ENCODE measurements at regions of chr11 and their contacts with region 1.

Region 1: DNA sequence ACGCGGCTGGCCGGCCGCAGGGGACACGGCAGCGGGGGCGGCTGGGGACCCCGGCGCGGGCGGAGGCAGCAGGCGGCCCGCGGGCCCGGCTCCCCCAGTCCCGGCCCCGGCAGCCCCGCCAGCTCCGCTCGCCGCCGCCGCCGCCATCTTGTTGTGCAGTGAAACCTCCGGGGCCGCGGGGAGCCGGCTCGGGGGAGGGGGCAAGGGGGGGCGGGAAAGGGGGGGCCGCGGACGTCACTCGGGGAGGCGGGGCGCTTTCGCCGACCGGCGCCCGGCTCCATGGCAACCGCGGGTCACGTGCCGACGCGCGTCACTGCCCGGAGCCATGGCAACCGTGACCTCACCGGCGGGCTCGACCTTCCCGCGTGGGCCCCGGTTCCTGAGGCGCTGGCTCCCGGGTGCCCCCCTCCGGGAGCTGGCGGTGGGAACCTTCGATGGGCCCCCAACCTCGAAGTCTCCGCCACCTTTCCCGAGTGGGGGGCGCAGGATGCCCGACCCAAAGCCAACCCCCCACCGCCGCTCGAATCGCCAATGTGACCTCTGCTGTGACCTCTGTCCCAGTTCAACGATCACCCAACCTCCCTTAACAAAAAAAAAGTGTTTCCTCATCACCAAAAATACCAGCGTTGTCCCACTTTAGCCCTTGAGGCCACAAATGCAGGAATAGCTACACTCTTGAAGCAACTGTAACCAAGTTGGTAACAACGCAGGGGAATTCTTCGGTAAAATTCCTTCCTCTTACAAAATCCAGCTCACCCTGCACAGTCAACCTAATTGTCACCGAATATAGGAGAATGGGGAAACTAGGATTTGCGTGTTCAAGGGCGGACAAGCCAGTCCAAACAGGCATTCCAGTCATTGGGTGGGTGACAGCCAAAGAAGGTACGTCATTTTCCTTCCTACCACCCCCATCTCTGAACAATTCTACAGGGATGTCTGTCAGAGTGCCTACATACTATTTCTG is at the start of gene SIK3:
- DNase-seq: peak; percentile 83 to 90
- ATAC-seq: peak; percentile 73 to 75
- H3K4me3 ChIP-seq: peak within 1 kb of the TSS; percentile 75 to 99 (median 88)
- H3K27ac ChIP-seq: peak within 1 kb of the TSS; percentile 90 to 97 (median 92)
- H3K4me1 ChIP-seq: peaks cover 41 to 45% of the 10 kb centered on the region in 2 donors
- H3K27me3 ChIP-seq: no peaks in the 10 kb centered on the region
- CTCF ChIP-seq: peak in 3 of 5 experiments; percentile 50 to 68 (median 59)
- POLR2A ChIP-seq: peak; percentile 55 to 69
- total RNA-seq, gene SIK3: 34.4 to 42.4 (median 37.2) TPM

Region 2: DNA sequence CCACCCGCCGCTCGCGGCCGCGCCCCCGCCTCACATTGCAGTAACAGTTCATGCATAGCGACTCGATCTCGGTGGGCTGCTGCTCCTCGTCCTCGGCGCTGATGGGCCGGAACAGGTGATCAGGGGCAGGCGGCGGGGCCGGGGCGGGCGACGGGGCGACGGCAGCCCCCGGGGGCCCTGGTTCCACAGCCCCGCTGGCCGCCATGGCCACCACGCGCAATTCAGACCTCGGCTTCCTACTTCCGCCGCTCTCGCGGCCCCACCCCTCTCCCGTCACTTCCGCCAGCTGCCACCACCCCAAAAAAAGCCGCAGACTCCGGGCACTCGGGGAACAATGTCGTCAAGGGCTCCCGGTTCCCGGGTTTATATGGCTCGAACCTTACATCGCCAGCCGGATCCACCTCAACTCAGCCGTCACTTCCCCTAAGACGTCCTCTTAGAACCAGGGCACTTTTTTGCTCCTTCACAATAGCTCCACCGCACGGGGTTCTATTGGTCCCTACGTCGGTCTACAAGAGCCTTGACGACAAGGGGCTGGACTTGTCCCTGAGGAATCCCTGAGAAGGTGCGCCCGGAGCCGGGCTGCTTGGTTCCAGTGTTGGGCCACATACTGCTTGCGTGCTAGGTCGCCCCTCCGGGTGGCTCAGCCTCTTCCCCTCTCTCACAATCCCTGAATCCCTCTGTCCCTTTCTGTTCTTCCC is 310.6 kb before region 1 on chr11 and contains the start of gene ZPR1:
- in situ Hi-C with region 1: loop called in 3 of 4 experiments (anchors 10 kb)
- intact Hi-C with region 1: loop called (anchors 2 kb)
- DNase-seq: peak; percentile 68 to 69
- ATAC-seq: peak; percentile 85 to 88
- H3K4me3 ChIP-seq: peak within 1 kb of the TSS; percentile 78 to 98 (median 96)
- H3K27ac ChIP-seq: peak within 1 kb of the TSS; percentile 83 to 89 (median 88)
- H3K4me1 ChIP-seq: peaks cover 17 to 18% of the 10 kb centered on the region in 2 donors
- H3K27me3 ChIP-seq: no peaks in the 10 kb centered on the region
- CTCF ChIP-seq: peak in 1 of 5 experiments; percentile 9
- POLR2A ChIP-seq: peak; percentile 61 to 77
- total RNA-seq, gene ZPR1: 43.3 to 82.5 (median 56.9) TPM

Region 3: DNA sequence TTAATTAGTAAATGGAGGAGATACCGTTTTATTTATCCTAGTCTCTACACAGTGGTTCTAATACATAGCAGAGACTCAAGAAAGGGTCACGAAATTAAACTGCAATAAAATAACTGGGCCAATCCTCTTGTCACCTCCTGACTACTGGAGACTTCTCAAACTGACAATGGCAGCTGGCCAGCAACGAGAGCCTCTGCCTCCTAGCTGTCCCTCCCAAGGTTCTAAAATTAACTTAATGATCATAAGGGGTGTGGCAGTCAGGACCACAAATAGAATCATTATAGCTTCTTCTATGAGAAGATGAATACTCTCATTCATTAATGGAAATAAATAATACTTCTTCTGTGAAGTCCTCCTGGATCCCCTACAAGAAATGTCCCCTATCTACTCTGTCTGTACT is 197.3 kb before region 1 on chr11:
- in situ Hi-C with region 1: no loop called
- intact Hi-C with region 1: loop called (anchors 2 kb)
- DNase-seq: peak; percentile 78 to 89
- ATAC-seq: peak; percentile 99 to 100
- H3K4me3 ChIP-seq: no peak overlapping the region
- H3K27ac ChIP-seq: peak overlapping the region; percentile 27 to 73 (median 66)
- H3K4me1 ChIP-seq: peaks cover 20 to 33% of the 10 kb centered on the region in 2 donors
- H3K27me3 ChIP-seq: no peaks in the 10 kb centered on the region
- CTCF ChIP-seq: no peak
- POLR2A ChIP-seq: no peak

Region 4: DNA sequence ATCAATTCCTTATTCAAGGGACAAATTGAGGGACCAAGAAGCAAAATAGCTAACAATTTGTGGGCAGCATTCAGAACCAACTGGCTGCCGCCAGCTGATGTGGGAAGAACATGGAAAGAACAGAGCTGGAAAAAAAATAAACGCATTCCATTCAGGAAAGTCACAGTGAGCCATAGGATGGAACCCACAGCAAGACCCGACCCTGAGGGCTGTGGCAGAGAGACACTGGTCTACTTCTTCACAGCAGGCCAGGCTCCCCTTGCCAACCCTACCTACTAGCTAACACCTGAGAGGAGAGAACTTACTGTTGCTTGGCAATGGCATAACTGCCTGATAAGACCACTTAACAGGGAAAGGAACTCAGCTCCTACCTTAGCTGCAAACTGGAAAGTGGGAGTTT is 137.6 kb before region 1 on chr11:
- in situ Hi-C with region 1: no loop called
- intact Hi-C with region 1: no loop called
- DNase-seq: no peak
- ATAC-seq: no peak
- H3K4me3 ChIP-seq: no peak overlapping the region
- H3K27ac ChIP-seq: no peak overlapping the region
- H3K4me1 ChIP-seq: peaks cover 34 to 42% of the 10 kb centered on the region in 2 donors
- H3K27me3 ChIP-seq: no peaks in the 10 kb centered on the region
- CTCF ChIP-seq: no peak
- POLR2A ChIP-seq: no peak

Region 5: DNA sequence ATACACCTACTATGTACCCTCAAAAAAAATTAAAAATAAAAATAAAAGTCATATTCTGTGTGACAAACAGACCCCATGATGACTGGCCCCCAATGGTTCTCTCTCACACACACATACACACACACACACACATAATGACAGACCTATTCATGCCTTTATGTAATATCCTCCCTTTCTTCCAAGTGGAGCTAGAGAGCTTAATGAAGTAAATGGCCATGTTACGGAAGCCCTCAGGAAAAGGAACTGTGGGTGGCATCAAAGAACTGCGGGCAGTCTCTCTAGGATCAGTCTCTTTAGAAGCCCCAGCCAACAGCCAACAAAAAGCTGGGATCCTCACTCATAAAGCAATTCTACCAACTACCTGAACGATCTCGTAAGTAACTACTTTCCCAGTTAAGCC is 125.9 kb before region 1 on chr11:
- in situ Hi-C with region 1: no loop called
- intact Hi-C with region 1: no loop called
- DNase-seq: no peak
- ATAC-seq: peak in 1 of 2 donors; percentile 41
- H3K4me3 ChIP-seq: no peak overlapping the region
- H3K27ac ChIP-seq: no peak overlapping the region
- H3K4me1 ChIP-seq: peaks cover 3 to 6% of the 10 kb centered on the region in 2 donors
- H3K27me3 ChIP-seq: no peaks in the 10 kb centered on the region
- CTCF ChIP-seq: no peak
- POLR2A ChIP-seq: no peak

Region 6: GRCh38 chr11:117045196-117045595 is 53.4 kb before region 1 on chr11:
- in situ Hi-C with region 1: no loop called
- intact Hi-C with region 1: loop called (anchors 5 kb)
- DNase-seq: peak in 1 of 2 donors; percentile 17
- ATAC-seq: peak; percentile 90 to 91
- H3K4me3 ChIP-seq: peak overlapping the region in 2 of 4 donors; percentile 5 to 19
- H3K27ac ChIP-seq: peak overlapping the region; percentile 58 to 70 (median 65)
- H3K4me1 ChIP-seq: peaks cover 50 to 53% of the 10 kb centered on the region in 2 donors
- H3K27me3 ChIP-seq: no peaks in the 10 kb centered on the region
- CTCF ChIP-seq: no peak
- POLR2A ChIP-seq: no peak

Region 7: DNA sequence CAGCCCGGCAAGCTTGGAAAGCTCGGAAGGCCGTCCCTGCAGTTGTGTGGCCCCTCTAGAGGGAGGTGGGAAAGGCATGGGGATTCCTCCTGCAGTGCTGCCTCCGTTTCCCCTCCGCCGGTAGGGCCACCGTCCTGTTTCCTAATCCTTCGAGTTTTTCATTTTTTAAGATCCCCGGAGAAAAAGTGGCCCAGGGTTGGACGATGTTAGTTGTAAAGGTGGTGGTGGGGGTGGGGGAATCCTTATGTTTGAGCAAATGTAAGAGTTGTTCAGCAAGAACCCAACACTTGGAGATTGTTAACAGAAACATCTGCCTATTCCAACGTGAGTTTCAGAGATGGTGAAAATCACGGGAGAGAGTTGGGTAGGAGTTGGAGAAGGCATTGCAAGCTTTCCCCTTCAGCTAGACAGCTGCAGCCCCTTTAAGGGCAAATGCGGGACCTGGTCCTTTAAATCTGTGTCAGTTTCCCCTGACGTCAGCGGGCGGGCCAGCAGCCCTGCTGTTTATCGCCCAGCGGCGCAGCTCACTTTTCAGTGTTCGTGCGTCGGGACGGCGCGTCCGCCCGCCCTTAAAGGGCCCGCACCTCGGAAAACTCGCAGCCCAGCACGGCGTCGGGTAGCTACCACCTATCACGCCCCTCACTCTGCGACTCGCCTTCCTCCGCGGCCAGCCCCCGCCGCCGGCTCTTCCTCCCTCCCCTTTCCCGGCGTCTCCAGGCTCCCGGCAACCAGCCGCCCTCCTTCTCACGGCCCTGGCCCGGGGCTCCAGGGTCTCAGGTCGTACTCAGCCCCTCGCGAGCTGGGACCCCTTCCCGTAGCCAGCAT is 79.9 kb after region 1 on chr11 and contains the start of gene SIDT2:
- in situ Hi-C with region 1: no loop called
- intact Hi-C with region 1: loop called (anchors 2 kb)
- DNase-seq: peak; percentile 91 to 93
- ATAC-seq: peak; percentile 81 to 90
- H3K4me3 ChIP-seq: peak within 1 kb of the TSS; percentile 62 to 98 (median 74)
- H3K27ac ChIP-seq: peak within 1 kb of the TSS; percentile 88 to 99 (median 89)
- H3K4me1 ChIP-seq: peaks cover 26 to 33% of the 10 kb centered on the region in 2 donors
- H3K27me3 ChIP-seq: no peaks in the 10 kb centered on the region
- CTCF ChIP-seq: peak in 1 of 5 experiments; percentile 26
- POLR2A ChIP-seq: peak; percentile 84 to 95
- total RNA-seq, gene SIDT2: 14.3 to 33.9 (median 17.7) TPM